GM12878 (cell line): ENCODE measurements at regions of chr20 and their contacts with region 1.

Region 1: GRCh38 chr20:32325706-32326503 is 32.2 kb upstream of the ASXL1 start:
- DNase-seq: no peak
- ATAC-seq: no peak
- H3K4me3 ChIP-seq: no peak overlapping the region
- H3K27ac ChIP-seq: no peak overlapping the region
- H3K4me1 ChIP-seq: peaks cover 5% of the 10 kb centered on the region
- H3K27me3 ChIP-seq: no peaks in the 10 kb centered on the region
- CTCF ChIP-seq: no peak
- EP300 ChIP-seq: no peak
- POLR2A ChIP-seq: no peak
- RAD21 ChIP-seq: no peak

Region 2: GRCh38 chr20:31987744-31988143 is 338.2 kb before region 1 on chr20:
- CTCF ChIA-PET with region 1: no interaction called
- POLR2A ChIA-PET with region 1: no interaction called
- RAD21 ChIA-PET with region 1: no interaction called
- SMC1A ChIA-PET with region 1: no interaction called
- in situ Hi-C with region 1: no loop called
- intact Hi-C with region 1: no loop called
- DNase-seq: no peak
- ATAC-seq: no peak
- H3K4me3 ChIP-seq: no peak overlapping the region
- H3K27ac ChIP-seq: no peak overlapping the region
- H3K4me1 ChIP-seq: no peaks in the 10 kb centered on the region
- H3K27me3 ChIP-seq: no peaks in the 10 kb centered on the region; a peak in 2 of 4 replicates
- CTCF ChIP-seq: no peak
- EP300 ChIP-seq: no peak
- POLR2A ChIP-seq: no peak
- RAD21 ChIP-seq: no peak

Region 3: DNA sequence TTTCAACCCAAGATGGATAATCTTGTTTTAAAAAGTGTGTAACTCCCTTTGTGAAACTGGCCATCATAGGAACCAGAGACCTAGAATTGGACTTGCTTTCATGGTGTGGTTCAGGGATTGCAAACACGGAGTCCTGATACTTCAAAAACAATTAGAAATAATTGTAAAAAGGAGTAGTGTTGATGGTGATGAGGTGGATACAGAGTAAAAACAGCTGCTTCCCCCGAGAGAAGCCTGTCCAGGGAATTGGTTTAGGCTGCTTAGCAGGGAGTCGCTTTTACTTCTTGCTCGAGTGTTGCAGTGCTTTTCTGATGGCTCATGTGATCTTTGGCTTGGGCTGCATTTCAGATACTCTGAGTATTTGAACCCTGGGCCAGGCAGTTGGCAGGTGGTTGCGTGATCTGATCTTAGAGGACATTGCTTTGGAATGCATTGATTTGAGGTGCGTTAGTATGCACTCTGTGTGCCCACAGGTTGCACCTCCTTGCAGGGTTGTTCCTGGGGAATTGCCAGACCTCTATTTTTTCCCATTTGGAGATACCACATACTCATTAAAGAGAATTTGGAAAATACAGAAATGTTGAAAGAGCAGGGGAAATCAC is 29.0 kb before region 1 on chr20:
- CTCF ChIA-PET with region 1: no interaction called
- POLR2A ChIA-PET with region 1: no interaction called
- RAD21 ChIA-PET with region 1: no interaction called
- SMC1A ChIA-PET with region 1: no interaction called
- in situ Hi-C with region 1: no loop called
- intact Hi-C with region 1: no loop called
- DNase-seq: no peak
- ATAC-seq: no peak
- H3K4me3 ChIP-seq: no peak overlapping the region
- H3K27ac ChIP-seq: no peak overlapping the region
- H3K4me1 ChIP-seq: no peaks in the 10 kb centered on the region
- H3K27me3 ChIP-seq: no peaks in the 10 kb centered on the region
- CTCF ChIP-seq: no peak
- EP300 ChIP-seq: no peak
- POLR2A ChIP-seq: no peak
- RAD21 ChIP-seq: no peak

Region 4: GRCh38 chr20:33883164-33883563 is 1557.3 kb after region 1 on chr20:
- CTCF ChIA-PET with region 1: no interaction called
- POLR2A ChIA-PET with region 1: interaction called, 10 read pairs
- RAD21 ChIA-PET with region 1: no interaction called
- SMC1A ChIA-PET with region 1: no interaction called
- in situ Hi-C with region 1: no loop called
- intact Hi-C with region 1: no loop called
- DNase-seq: peak; percentile 73
- ATAC-seq: peak; percentile 94
- H3K4me3 ChIP-seq: peak overlapping the region; percentile 19; the same call in 1 of the 2 replicates
- H3K27ac ChIP-seq: peak overlapping the region; percentile 86
- H3K4me1 ChIP-seq: peaks cover 39% of the 10 kb centered on the region
- H3K27me3 ChIP-seq: no peaks in the 10 kb centered on the region
- CTCF ChIP-seq: peak in 2 of 3 experiments; percentile 10 to 23; a peak in 3 of 6 replicates
- EP300 ChIP-seq: peak in 1 of 2 experiments; percentile 56; a peak in 2 of 4 replicates
- POLR2A ChIP-seq: no peak
- RAD21 ChIP-seq: peak; percentile 36; the same call in 1 of the 2 replicates